ENCODE measurements at regions of chr2 and their contacts with region 1.

Region 1: GRCh38 chr2:233976690-233977294 is 59.6 kb downstream of the TRPM8 start:
- DNase-seq: peak; percentile 17
- H3K4me3 ChIP-seq: no peak overlapping the region
- CTCF ChIP-seq: peak; percentile 49

Region 2: DNA sequence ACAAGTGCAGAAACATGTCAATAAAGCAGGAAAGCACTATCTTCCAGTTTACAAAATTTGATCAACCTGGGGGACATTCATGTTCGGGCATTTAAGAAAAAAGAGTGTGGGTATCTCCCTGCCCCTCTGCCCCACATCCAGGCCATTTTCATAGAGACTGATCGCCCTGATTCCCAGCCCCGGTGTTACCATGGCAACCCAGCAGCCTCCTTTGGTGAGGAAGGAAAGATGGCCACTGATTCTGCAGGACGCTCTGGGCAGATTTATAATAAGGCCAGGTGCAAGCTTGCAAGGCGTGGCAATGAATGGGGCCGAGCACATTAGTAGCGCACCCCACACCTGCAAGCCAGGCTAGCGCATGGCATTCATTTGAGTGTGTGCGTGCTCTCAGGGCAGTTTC is 556.8 kb after region 1 on chr2:
- CTCF ChIA-PET with region 1: interaction called, 14 read pairs
- POLR2A ChIA-PET with region 1: no interaction called
- DNase-seq: no peak
- H3K4me3 ChIP-seq: no peak overlapping the region
- CTCF ChIP-seq: no peak